ENCODE measurements at regions of chr3 and their contacts with region 1.

Region 1: GRCh38 chr3:17431004-17431403 is 311.4 kb downstream of the TBC1D5 start:
- DNase-seq: no peak
- ATAC-seq: peak; percentile 65
- H3K4me3 ChIP-seq: no peak overlapping the region
- H3K27ac ChIP-seq: no peak overlapping the region
- H3K4me1 ChIP-seq: no peaks in the 10 kb centered on the region
- H3K27me3 ChIP-seq: no peaks in the 10 kb centered on the region
- CTCF ChIP-seq: peak; percentile 14 to 53 (median 34); a peak in 4 of 6 replicates
- EP300 ChIP-seq: no peak
- POLR2A ChIP-seq: no peak
- RAD21 ChIP-seq: peak; percentile 60

Region 2: DNA sequence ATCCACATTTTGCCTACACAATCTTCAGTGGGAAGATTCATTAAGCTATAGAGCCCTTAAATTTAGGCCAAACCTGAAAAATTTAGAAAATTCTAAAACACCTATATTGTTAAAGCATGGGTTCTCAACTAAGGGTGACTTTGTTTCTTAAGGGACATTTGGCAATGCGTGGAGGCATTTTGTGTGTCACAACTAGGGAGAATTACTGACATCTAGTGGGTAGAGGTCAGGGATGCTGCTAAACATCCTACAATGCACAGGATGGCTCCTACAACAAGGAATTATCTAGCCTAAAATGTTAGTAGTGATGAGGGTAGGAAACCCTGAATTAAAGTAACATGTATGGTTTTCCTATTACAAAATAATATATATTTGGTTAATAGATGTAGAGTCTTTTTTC is 255.6 kb after region 1 on chr3:
- CTCF ChIA-PET with region 1: interaction called, 11 read pairs
- POLR2A ChIA-PET with region 1: no interaction called
- RAD21 ChIA-PET with region 1: no interaction called
- SMC1A ChIA-PET with region 1: interaction called, 5 read pairs
- in situ Hi-C with region 1: no loop called
- intact Hi-C with region 1: loop called (anchors 1 kb)
- DNase-seq: no peak
- ATAC-seq: peak; percentile 48
- H3K4me3 ChIP-seq: no peak overlapping the region
- H3K27ac ChIP-seq: no peak overlapping the region
- H3K4me1 ChIP-seq: no peaks in the 10 kb centered on the region
- H3K27me3 ChIP-seq: no peaks in the 10 kb centered on the region
- CTCF ChIP-seq: peak; percentile 21 to 32 (median 26); a peak in 3 of 6 replicates
- EP300 ChIP-seq: no peak
- POLR2A ChIP-seq: no peak
- RAD21 ChIP-seq: peak; percentile 58

Region 3: DNA sequence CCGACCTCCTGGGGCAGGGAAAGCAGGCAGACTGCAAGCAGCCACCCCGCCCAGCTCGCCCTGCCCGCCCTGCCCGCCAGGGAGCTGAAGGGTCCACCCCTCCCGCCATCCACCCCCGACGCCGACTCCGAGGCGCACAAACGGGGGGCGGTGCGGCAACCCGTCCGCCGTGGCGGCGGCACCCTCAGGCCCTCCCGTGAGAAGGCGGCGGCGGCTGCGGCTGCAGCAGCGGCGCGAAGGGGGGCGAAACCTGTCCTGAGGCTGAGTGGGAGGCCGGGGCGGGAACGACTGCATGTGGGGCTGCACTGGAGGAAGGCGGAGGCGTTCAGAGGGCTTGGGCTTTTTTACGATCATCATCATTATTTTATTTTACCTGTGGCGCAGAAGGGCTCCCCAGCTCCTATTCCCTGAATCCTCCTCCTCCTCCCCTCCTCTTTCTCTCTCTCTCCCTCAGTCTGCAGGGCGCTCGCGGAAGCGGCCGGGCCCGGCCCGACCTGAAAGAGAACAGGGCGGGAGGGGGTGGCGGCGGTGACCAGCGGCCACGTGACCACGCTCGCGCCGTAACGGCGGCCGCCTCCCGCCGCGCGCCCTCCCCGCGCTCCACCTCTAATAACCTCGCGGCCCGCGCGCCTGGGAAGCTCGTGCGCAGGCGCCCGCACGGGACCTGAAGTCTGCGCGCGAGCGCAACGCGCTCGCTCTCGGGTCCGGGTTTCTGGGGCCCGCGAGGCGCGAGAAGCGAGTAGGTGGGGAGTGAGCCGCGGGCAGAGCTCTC is 311.3 kb after region 1 on chr3 and contains the start of gene TBC1D5:
- CTCF ChIA-PET with region 1: no interaction called
- POLR2A ChIA-PET with region 1: interaction called, 4 read pairs
- RAD21 ChIA-PET with region 1: interaction called, 5 read pairs
- SMC1A ChIA-PET with region 1: interaction called, 7 read pairs
- in situ Hi-C with region 1: no loop called
- intact Hi-C with region 1: loop called (anchors 5 kb)
- DNase-seq: peak; percentile 91
- ATAC-seq: peak; percentile 82
- H3K4me3 ChIP-seq: peak within 1 kb of the TSS; percentile 94
- H3K27ac ChIP-seq: peak within 1 kb of the TSS; percentile 94
- H3K4me1 ChIP-seq: peaks cover 13% of the 10 kb centered on the region
- H3K27me3 ChIP-seq: no peaks in the 10 kb centered on the region
- CTCF ChIP-seq: peak in 1 of 3 experiments; percentile 6; a peak in 1 of 6 replicates
- EP300 ChIP-seq: no peak
- POLR2A ChIP-seq: peak; percentile 90
- RAD21 ChIP-seq: no peak
- polyA plus RNA-seq, gene TBC1D5: 5.5 to 5.8 TPM